ENCODE measurements at regions of chr7 and their contacts with region 1.

Region 1: DNA sequence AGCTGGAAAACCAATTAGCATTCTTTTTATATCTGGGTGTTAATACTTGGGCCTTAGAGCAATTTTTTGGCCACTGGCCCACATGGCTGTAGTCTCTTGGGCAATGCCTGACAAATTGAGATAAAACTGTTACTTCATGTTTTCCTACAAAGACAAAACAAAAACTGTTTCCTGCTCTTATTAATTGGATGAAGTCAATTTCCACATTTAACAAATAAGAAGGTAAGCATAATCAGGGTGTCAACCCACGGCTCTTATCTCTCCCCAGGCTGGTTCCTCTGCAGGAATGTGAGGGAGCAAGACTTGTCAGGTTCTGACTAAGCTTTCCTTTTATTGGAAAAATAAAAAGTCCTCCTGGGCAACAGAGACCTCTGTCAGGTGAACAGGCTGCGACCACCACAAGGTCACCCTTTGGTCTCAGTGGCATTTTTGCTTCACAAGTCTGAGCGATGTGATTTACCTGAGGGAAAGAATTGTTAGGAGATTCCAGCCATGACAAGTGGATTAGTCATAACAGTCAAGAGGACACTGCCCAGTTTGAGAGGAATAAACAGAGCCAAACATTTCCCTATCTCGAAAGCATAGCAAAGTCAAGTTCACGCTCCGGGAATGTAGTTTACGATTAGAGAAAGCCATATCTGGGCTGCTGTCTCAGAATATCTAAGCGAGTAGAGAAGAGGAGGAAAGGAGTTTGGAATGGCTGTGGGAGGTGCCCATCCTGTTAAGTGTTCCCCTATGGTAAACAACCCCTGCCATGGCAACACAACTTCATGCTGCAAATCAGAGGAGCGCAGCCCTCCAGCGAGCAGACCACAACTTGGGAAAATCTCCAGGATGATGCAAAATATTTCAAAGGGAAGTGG is 144.4 kb downstream of the TES start:
- DNase-seq: peak; percentile 98
- H3K4me3 ChIP-seq: peak overlapping the region; percentile 26 to 42 (median 31)
- H3K27ac ChIP-seq: peak overlapping the region; percentile 100
- H3K4me1 ChIP-seq: peaks cover 53% of the 10 kb centered on the region
- H3K27me3 ChIP-seq: no peaks in the 10 kb centered on the region
- CTCF ChIP-seq: no peak

Region 2: GRCh38 chr7:116271963-116272839 is 82.6 kb before region 1 on chr7:
- CTCF ChIA-PET with region 1: no interaction called
- dilution Hi-C with region 1: loop called (anchors 5 kb)
- in situ Hi-C with region 1: no loop called
- intact Hi-C with region 1: no loop called
- DNase-seq: peak; percentile 95
- H3K4me3 ChIP-seq: peak overlapping the region in 2 of 3 experiments; percentile 17 to 18
- H3K27ac ChIP-seq: peak overlapping the region; percentile 93
- H3K4me1 ChIP-seq: peaks cover 38% of the 10 kb centered on the region
- H3K27me3 ChIP-seq: no peaks in the 10 kb centered on the region
- CTCF ChIP-seq: no peak

Region 3: DNA sequence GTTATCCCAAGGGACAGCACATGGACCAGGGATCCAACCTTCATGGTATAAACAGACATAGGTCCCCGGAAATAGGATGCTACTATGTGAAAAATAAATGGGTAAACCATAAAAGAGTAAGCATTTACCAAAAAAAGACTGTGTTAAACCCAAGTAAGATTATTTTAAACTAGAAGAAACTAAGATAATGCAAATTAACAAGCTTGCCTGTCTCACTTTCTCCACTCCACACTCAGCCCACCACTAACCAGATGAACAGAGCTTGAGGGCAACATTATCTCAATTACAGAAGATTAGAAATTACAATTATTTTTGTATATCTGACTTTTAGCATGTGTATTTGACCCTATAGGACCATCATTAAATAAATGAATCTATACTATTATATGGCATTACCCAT is 27.6 kb after region 1 on chr7:
- CTCF ChIA-PET with region 1: interaction called, 17 read pairs
- dilution Hi-C with region 1: no loop called
- in situ Hi-C with region 1: no loop called
- intact Hi-C with region 1: no loop called
- DNase-seq: no peak
- H3K4me3 ChIP-seq: no peak overlapping the region
- H3K27ac ChIP-seq: no peak overlapping the region
- H3K4me1 ChIP-seq: no peaks in the 10 kb centered on the region
- H3K27me3 ChIP-seq: no peaks in the 10 kb centered on the region
- CTCF ChIP-seq: no peak

Region 4: GRCh38 chr7:116426428-116427156 is 71.8 kb after region 1 on chr7:
- CTCF ChIA-PET with region 1: no interaction called
- dilution Hi-C with region 1: no loop called
- in situ Hi-C with region 1: no loop called
- intact Hi-C with region 1: loop called (anchors 2 kb)
- DNase-seq: peak; percentile 76
- H3K4me3 ChIP-seq: no peak overlapping the region
- H3K27ac ChIP-seq: peak overlapping the region; percentile 81
- H3K4me1 ChIP-seq: peaks cover 41% of the 10 kb centered on the region
- H3K27me3 ChIP-seq: no peaks in the 10 kb centered on the region
- CTCF ChIP-seq: no peak

Region 5: DNA sequence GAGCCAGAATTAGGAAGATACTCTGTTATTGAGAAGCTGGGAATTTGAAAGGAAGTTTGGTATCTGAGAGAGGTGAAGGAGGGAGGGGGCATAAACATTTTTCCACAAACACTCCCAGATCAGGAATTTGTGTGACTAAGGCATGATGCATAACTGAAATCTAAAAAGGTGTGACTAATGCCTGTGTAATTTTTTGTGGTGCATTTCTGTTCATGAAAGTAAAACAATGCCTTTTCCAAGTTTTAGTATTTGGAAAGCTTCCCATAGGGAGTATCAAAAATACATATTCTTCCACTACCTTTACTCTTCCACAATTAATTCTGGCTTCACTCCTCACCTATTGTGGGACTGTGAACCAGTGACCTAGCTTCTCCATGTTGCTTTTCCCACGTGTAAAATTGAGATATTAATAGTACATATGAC is 88.3 kb after region 1 on chr7:
- CTCF ChIA-PET with region 1: no interaction called
- dilution Hi-C with region 1: no loop called
- in situ Hi-C with region 1: no loop called
- intact Hi-C with region 1: loop called (anchors 2 kb)
- DNase-seq: peak; percentile 90
- H3K4me3 ChIP-seq: no peak overlapping the region
- H3K27ac ChIP-seq: peak overlapping the region; percentile 98
- H3K4me1 ChIP-seq: peaks cover 30% of the 10 kb centered on the region
- H3K27me3 ChIP-seq: no peaks in the 10 kb centered on the region
- CTCF ChIP-seq: no peak